ENCODE measurements at regions of chr1 and their contacts with region 1.

Region 1: DNA sequence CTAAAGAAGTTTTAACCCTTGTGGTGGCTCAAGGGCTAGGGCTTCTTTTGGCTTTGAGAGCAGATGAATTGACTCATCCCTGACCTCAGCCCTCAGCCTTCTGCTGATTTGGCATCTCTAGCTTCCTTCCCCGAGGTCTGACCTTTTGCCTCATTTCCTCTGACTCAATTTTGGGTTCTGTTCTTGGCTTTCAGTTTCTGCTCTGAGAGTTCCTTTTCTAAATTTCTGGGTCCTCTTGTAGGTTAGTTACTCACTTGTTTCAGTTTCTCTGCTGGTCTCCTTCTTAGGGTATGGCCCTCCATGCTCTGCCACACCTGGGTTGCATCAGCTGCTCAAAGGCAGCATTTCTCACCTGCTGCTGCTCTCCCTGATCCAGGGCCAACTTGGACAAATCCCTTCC is 19.4 kb downstream of the PDE4B start:
- DNase-seq: peak; percentile 83
- H3K4me3 Mint-ChIP-seq: peak overlapping the region; percentile 0
- H3K27ac Mint-ChIP-seq: peak overlapping the region; percentile 80
- H3K4me1 Mint-ChIP-seq: peaks cover 41% of the 10 kb centered on the region
- H3K27me3 Mint-ChIP-seq: peaks cover 21% of the 10 kb centered on the region

Region 2: DNA sequence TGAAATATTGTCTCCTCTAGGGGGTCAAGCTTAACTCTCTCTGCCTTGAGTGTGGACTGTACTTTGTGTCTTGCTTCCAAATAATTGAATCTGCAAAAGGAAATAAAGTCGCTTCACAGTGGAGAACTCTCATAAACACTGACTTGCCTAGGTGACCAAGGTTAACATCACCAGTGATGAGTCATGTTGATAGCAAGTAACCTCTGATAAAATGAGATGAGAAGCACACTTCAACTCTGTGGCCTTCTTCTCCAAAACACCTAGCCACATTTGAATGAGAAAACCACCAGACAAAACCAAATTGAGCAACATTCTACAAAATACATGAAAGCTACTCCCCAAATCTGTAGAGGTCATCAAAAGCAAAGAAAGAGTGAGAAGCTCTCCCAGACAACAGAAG is 18.2 kb after region 1 on chr1:
- CTCF ChIA-PET with region 1: interaction called, 11 read pairs
- POLR2A ChIA-PET with region 1: interaction called, 37 read pairs
- DNase-seq: peak; percentile 18
- H3K4me3 Mint-ChIP-seq: no peak overlapping the region
- H3K27ac Mint-ChIP-seq: peak overlapping the region; percentile 68
- H3K4me1 Mint-ChIP-seq: peaks cover 22% of the 10 kb centered on the region
- H3K27me3 Mint-ChIP-seq: peaks cover 35% of the 10 kb centered on the region

Region 3: GRCh38 chr1:65866439-65866838 is 54.4 kb after region 1 on chr1:
- CTCF ChIA-PET with region 1: no interaction called
- POLR2A ChIA-PET with region 1: interaction called, 10 read pairs
- DNase-seq: no peak
- H3K4me3 Mint-ChIP-seq: no peak overlapping the region
- H3K27ac Mint-ChIP-seq: no peak overlapping the region
- H3K4me1 Mint-ChIP-seq: peaks cover 16% of the 10 kb centered on the region
- H3K27me3 Mint-ChIP-seq: peaks cover 17% of the 10 kb centered on the region

Region 4: DNA sequence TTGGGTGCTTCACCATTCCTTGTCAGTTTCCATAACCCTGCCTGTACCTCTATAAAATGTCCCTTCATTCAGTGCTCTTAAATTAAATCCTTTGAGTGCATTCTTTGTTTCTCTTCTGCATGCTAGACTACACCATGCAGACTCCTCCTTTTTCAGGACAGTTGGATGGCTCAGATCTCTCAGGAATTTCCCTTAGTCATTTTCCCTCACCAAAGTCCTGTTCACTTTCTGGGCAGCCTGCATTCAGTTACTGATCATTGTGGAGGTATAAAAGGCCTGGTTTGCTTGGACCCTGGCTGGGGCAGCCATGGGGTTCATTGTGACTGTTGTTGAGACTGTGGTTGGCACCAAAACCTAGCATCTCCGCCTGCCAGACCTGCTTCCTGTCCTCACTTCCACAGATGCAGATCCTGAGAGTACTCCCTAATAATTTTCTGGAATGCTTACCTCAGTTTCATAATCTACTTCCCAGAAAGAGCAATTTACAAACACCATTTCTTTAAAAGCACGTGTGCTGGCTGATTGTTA is 69.1 kb after region 1 on chr1:
- CTCF ChIA-PET with region 1: no interaction called
- POLR2A ChIA-PET with region 1: no interaction called
- DNase-seq: no peak
- H3K4me3 Mint-ChIP-seq: no peak overlapping the region
- H3K27ac Mint-ChIP-seq: no peak overlapping the region
- H3K4me1 Mint-ChIP-seq: no peaks in the 10 kb centered on the region
- H3K27me3 Mint-ChIP-seq: peaks cover 5% of the 10 kb centered on the region

Measured in activated CD4-positive, alpha-beta memory T cell treated with anti-CD3 and anti-CD28 coated beads, Interleukin-2, amount 10 ng/mL, durations not matched to agents 7 days and 5 days (primary cell).